Activated CD4-positive, alpha-beta T cell treated with anti-CD3 and anti-CD28 coated beads, Interleukin-2, amount 10 ng/mL, durations not matched to agents 7 days and 5 days (primary cell): ENCODE measurements at regions of chr20 and their contacts with region 1.

Region 1: GRCh38 chr20:59269411-59270025 is 30.9 kb upstream of the EDN3 start:
- DNase-seq: peak; percentile 25
- H3K4me3 Mint-ChIP-seq: no peak overlapping the region
- H3K27ac Mint-ChIP-seq: peak overlapping the region; percentile 47
- H3K4me1 Mint-ChIP-seq: peaks cover 50% of the 10 kb centered on the region
- H3K27me3 Mint-ChIP-seq: peaks cover 40% of the 10 kb centered on the region

Region 2: DNA sequence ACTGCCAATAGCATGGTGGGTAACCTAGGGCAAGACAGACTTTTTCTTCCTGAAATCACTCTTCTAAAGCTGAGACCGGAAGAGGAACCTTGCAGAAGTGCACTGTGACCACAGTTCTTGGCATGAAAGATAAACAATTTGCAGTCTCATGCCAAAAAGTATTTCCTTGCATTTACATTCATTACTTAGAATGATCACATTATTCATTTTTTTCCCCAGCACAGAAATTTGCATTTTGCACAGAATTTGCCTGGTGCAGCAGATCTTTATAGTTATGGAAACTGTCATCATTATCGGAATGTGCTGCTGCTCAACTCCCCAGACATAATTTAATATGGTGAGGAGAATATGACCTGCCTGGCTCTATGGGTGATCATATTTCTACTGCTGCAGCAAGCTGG is 11.3 kb before region 1 on chr20:
- CTCF ChIA-PET with region 1: interaction called, 6 read pairs
- POLR2A ChIA-PET with region 1: interaction called, 11 read pairs
- DNase-seq: peak; percentile 36
- H3K4me3 Mint-ChIP-seq: peak overlapping the region; percentile 2
- H3K27ac Mint-ChIP-seq: peak overlapping the region; percentile 92
- H3K4me1 Mint-ChIP-seq: peaks cover 63% of the 10 kb centered on the region
- H3K27me3 Mint-ChIP-seq: peaks cover 7% of the 10 kb centered on the region